Psoas muscle (tissue), 8 donors: ENCODE measurements at regions of chr19 and their contacts with region 1.

Region 1: DNA sequence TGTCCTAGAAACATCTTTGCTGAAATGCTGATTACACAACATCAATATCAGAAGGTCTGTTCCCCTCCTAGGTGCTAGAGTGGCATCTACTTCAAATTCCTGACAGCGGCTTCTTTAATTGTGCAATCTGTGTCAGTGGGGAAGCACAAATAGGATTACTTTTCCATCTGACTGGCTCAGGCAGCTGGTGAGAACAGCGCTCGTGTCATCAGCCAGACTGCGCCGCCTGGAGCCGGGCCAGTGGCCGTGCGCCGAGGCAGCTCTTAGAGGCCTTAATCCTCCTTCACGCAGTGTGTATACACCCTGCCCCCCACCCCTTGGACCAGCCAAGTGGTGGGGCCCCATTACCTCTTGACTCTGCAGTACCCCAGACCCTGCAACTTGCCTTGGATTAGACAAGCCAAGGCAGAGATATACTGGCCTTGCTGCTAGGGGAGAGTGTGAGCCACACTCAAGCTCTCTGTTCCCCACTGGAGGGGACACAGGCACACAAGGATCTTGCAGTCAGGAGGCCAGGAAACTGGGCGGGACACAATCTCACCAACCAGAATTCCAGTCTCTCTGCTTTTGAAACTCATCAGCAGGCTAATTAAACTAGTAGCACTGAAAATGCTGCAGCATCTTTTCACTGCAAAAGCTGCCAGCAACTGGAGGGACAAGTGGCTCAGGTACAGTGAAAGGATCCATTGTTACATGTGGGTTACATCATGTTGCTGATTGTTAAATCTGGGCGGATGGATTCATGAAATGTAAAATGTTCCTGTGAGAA is 48.9 kb upstream of the EPHX3 start:
- DNase-seq: peak; percentile 91 to 95
- ATAC-seq: peak; percentile 70 to 83 (median 77)
- H3K4me3 ChIP-seq: no peak overlapping the region
- H3K27ac ChIP-seq: peak overlapping the region; percentile 83
- H3K4me1 ChIP-seq: peaks cover 100% of the 10 kb centered on the region
- H3K27me3 ChIP-seq: no peaks in the 10 kb centered on the region
- CTCF ChIP-seq: no peak

Region 2: GRCh38 chr19:15318241-15318691 is 37.2 kb after region 1 on chr19:
- intact Hi-C with region 1: loop called (anchors 5 kb)
- DNase-seq: no peak
- ATAC-seq: peak; percentile 42 to 68 (median 57)
- H3K4me3 ChIP-seq: peak overlapping the region; percentile 15
- H3K27ac ChIP-seq: peak overlapping the region; percentile 81
- H3K4me1 ChIP-seq: peaks cover 91% of the 10 kb centered on the region
- H3K27me3 ChIP-seq: no peaks in the 10 kb centered on the region
- CTCF ChIP-seq: no peak